ENCODE measurements at regions of chr10 and their contacts with region 1.

Region 1: GRCh38 chr10:89414146-89414878 is at the start of gene IFIT5:
- DNase-seq: peak; percentile 53 to 81 (median 68)
- ATAC-seq: peak; percentile 81 to 85
- H3K4me3 Mint-ChIP-seq: peak within 1 kb of the TSS; percentile 92 to 100 (median 97)
- H3K27ac Mint-ChIP-seq: peak within 1 kb of the TSS; percentile 91 to 100 (median 98)
- H3K4me1 Mint-ChIP-seq: peaks cover 26 to 78% (median 52%) of the 10 kb centered on the region in 4 donors
- H3K27me3 Mint-ChIP-seq: no peaks in the 10 kb centered on the region
- polyA plus RNA-seq, gene IFIT5: 9.0 to 10.6 (median 10.3) TPM

Region 2: GRCh38 chr10:89301721-89302445 is 112.4 kb before region 1 on chr10 and contains the start of gene IFIT2:
- POLR2A ChIA-PET with region 1: interaction called, 15 read pairs
- DNase-seq: peak in 7 of 10 donors; percentile 10 to 68 (median 25)
- ATAC-seq: peak; percentile 76 to 81
- H3K4me3 Mint-ChIP-seq: peak within 1 kb of the TSS; percentile 88 to 97 (median 94)
- H3K27ac Mint-ChIP-seq: peak within 1 kb of the TSS; percentile 90 to 99 (median 97)
- H3K4me1 Mint-ChIP-seq: peaks cover 19 to 56% (median 33%) of the 10 kb centered on the region in 4 donors
- H3K27me3 Mint-ChIP-seq: no peaks in the 10 kb centered on the region
- polyA plus RNA-seq, gene IFIT2: 3.7 to 7.0 (median 5.7) TPM

Region 3: GRCh38 chr10:89391917-89392756 is 22.2 kb before region 1 on chr10 and contains the start of gene IFIT1:
- POLR2A ChIA-PET with region 1: interaction called, 70 read pairs
- DNase-seq: peak; percentile 12 to 81 (median 46)
- ATAC-seq: peak; percentile 95
- H3K4me3 Mint-ChIP-seq: peak within 1 kb of the TSS; percentile 86 to 95 (median 88)
- H3K27ac Mint-ChIP-seq: peak within 1 kb of the TSS; percentile 87 to 99 (median 91)
- H3K4me1 Mint-ChIP-seq: peaks cover 12 to 50% (median 30%) of the 10 kb centered on the region in 4 donors
- H3K27me3 Mint-ChIP-seq: no peaks in the 10 kb centered on the region
- polyA plus RNA-seq, gene IFIT1: 1.0 to 6.9 (median 2.9) TPM

Measured in naive thymus-derived CD8-positive, alpha-beta T cell (primary cell).